ENCODE measurements at regions of chr5 and their contacts with region 1.

Region 1: GRCh38 chr5:128905571-128906110 is 59.6 kb upstream of the SLC27A6 start:
- DNase-seq: peak in 1 of 2 donors; percentile 74
- ATAC-seq: peak in 1 of 3 donors; percentile 61
- H3K4me3 ChIP-seq: no peak overlapping the region
- H3K4me3 Mint-ChIP-seq: no peak overlapping the region
- H3K27ac ChIP-seq: no peak overlapping the region
- H3K27ac Mint-ChIP-seq: no peak overlapping the region
- H3K4me1 ChIP-seq: no peaks in the 10 kb centered on the region
- H3K4me1 Mint-ChIP-seq: no peaks in the 10 kb centered on the region
- H3K27me3 ChIP-seq: no peaks in the 10 kb centered on the region
- H3K27me3 Mint-ChIP-seq: no peaks in the 10 kb centered on the region
- CTCF ChIP-seq: peak; percentile 69

Region 2: GRCh38 chr5:129767906-129768380 is 862.3 kb after region 1 on chr5:
- intact Hi-C with region 1: loop called (anchors 2 kb)
- DNase-seq: peak in 1 of 2 donors; percentile 81
- ATAC-seq: peak; percentile 53 to 70 (median 64)
- H3K4me3 ChIP-seq: no peak overlapping the region
- H3K4me3 Mint-ChIP-seq: no peak overlapping the region
- H3K27ac ChIP-seq: no peak overlapping the region
- H3K27ac Mint-ChIP-seq: no peak overlapping the region
- H3K4me1 ChIP-seq: no peaks in the 10 kb centered on the region
- H3K4me1 Mint-ChIP-seq: no peaks in the 10 kb centered on the region
- H3K27me3 ChIP-seq: no peaks in the 10 kb centered on the region
- H3K27me3 Mint-ChIP-seq: no peaks in the 10 kb centered on the region
- CTCF ChIP-seq: peak; percentile 74